HepG2 (cell line): ENCODE measurements at regions of chr16 and their contacts with region 1.

Region 1: GRCh38 chr16:30112197-30113030 is 923 bp downstream of the GDPD3 start:
- DNase-seq: peak; percentile 83
- ATAC-seq: peak; percentile 87
- H3K4me3 ChIP-seq: peak overlapping the region; percentile 23 to 65 (median 27)
- H3K27ac ChIP-seq: peak overlapping the region; percentile 70
- H3K4me1 ChIP-seq: peaks cover 30% of the 10 kb centered on the region
- H3K27me3 ChIP-seq: no peaks in the 10 kb centered on the region
- CTCF ChIP-seq: peak; percentile 99
- EP300 ChIP-seq: peak in 1 of 2 experiments; percentile 21; a peak in 1 of 4 replicates
- POLR2A ChIP-seq: peak; percentile 21 to 47; a peak in 1 of 4 replicates
- RAD21 ChIP-seq: peak; percentile 99

Region 2: DNA sequence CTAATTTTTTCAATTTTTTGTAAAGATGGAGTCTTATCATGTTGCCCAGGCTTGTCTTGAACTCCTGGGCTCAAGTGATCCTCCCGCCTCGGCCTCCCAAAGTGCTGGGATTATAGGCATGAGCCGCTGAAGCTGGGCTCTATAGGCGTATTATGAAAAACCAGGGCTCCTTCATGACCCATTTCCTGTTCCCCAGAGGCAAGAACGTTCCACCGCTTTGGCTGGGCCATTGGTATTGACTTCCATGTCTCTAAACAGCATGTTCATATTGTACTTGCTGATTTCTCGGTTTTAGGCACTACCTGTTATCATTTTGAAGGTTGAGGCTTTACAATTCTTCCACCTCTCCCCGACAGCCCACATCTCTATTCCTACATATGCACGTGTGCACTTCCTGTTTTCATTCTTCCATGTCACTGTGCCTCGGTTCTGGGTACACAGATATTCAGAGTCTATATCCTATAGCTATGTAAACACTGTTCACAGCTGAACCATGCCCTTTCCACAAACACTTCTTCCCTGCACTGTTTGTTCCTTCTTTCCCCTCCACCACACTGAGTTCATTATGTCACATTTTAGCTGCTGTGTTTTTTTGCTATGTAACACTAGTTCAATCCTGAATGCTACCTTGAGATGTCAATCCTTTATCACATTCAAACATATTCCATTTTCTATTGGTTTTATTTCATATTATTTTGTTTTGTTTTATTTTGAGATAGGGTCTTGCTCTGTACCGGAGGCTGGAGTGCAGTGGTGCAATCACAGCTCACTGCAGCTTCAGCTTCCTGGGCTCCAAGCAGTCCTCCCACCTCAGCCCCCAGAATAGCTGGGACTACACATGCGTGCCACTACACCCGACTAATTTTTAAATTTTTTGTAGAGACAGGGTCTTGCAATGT is 27.4 kb after region 1 on chr16:
- CTCF ChIA-PET with region 1: no interaction called
- POLR2A ChIA-PET with region 1: interaction called, 23 read pairs
- in situ Hi-C with region 1: no loop called
- intact Hi-C with region 1: no loop called
- DNase-seq: peak; percentile 98
- ATAC-seq: peak; percentile 96
- H3K4me3 ChIP-seq: peak overlapping the region; percentile 1 to 25 (median 8); a peak in 2 of 6 replicates
- H3K27ac ChIP-seq: peak overlapping the region; percentile 85
- H3K4me1 ChIP-seq: peaks cover 90% of the 10 kb centered on the region
- H3K27me3 ChIP-seq: no peaks in the 10 kb centered on the region
- CTCF ChIP-seq: peak; percentile 33
- EP300 ChIP-seq: peak; percentile 64 to 92; a peak in 3 of 4 replicates
- POLR2A ChIP-seq: peak; percentile 50; a peak in 3 of 4 replicates
- RAD21 ChIP-seq: 0 out of 2 replicates have a peak, but pooled peaks have one; percentile 25

Region 3: GRCh38 chr16:30509081-30509765 is 396.8 kb after region 1 on chr16:
- CTCF ChIA-PET with region 1: no interaction called
- POLR2A ChIA-PET with region 1: no interaction called
- in situ Hi-C with region 1: no loop called
- intact Hi-C with region 1: no loop called
- DNase-seq: no peak
- ATAC-seq: no peak
- H3K4me3 ChIP-seq: no peak overlapping the region
- H3K27ac ChIP-seq: no peak overlapping the region
- H3K4me1 ChIP-seq: peaks cover 7% of the 10 kb centered on the region
- H3K27me3 ChIP-seq: no peaks in the 10 kb centered on the region
- CTCF ChIP-seq: no peak
- EP300 ChIP-seq: no peak
- POLR2A ChIP-seq: no peak
- RAD21 ChIP-seq: no peak